KBM-7 (cell line): ENCODE measurements at regions of chr17 and their contacts with region 1.

Region 1: GRCh38 chr17:10618202-10618635 is 38.9 kb downstream of the MYH3 start:
- DNase-seq: peak; percentile 73

Region 2: GRCh38 chr17:9924735-9925191 is 693.5 kb before region 1 on chr17:
- in situ Hi-C with region 1: loop called (anchors 25 kb)
- DNase-seq: peak; percentile 74

Region 3: GRCh38 chr17:10327640-10328039 is 290.6 kb before region 1 on chr17:
- in situ Hi-C with region 1: loop called (anchors 10 kb)
- DNase-seq: peak; percentile 82

Region 4: DNA sequence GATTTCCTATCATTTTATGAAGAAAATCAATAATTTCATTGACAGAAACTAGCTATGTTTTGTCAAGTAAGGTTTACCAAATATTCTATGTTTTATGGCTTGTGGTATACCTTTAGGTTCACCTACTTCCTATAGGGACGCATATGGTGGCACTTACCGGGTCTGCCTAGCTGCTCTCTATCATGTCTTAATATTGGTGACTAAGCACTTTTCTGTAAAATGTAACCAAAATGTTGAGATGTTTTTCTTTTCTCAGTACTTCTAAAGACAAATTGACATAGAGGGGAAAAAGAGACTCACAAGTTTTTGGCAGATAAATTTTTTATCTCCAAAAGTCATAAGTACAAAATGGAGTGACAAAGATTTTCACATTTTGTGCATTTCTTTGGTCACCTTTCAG is 126.2 kb before region 1 on chr17:
- in situ Hi-C with region 1: no loop called
- DNase-seq: no peak